ENCODE measurements at regions of chr15 and their contacts with region 1.

Region 1: DNA sequence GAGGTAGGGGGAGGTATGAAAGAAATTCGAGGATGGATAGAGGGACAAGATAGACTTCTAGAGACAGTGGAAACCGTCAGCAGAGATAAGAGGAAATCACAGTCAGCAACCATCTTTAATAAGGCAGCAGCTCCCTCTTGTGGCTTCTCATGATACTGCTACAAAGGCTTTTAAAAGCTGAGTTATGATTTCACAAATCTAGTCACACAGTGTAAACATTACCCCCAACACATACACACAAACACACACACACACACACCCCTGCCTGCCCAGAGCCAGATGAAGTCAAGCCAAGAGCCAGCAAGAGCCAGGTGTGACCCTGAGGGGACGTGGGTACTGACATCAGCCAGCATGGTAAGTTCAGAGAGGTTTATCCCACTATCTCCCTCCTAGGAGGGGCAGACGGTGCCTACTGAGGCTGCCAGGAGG is 18.9 kb upstream of the TGM5 start:
- DNase-seq: peak; percentile 39
- H3K4me3 ChIP-seq: no peak overlapping the region
- H3K27ac ChIP-seq: no peak overlapping the region
- H3K4me1 ChIP-seq: no peaks in the 10 kb centered on the region
- H3K27me3 ChIP-seq: peaks cover 9% of the 10 kb centered on the region
- CTCF ChIP-seq: peak; percentile 77 to 86 (median 79)
- EP300 ChIP-seq: no peak
- POLR2A ChIP-seq: no peak

Region 2: DNA sequence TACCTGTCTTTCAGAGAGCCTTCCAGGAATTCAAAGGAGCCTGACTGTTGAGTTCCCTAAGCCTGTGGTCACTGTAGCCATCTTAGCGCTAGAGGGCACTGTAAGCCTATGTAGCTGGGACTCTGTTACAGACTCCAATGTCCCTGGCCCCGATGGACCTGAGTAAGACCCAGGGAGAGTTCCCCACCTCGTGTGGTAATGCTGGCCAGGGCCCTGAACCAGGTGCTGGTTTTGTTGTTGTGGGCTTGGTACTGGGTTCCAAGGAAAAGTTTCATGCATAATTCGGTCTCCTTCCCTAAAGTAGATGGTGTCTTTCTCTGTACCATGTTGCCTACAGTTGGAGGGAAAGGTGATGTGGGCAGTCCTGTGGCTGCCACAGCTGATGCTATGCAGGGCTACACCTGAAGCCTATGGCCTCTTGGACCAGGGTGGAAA is 581.1 kb before region 1 on chr15:
- in situ Hi-C with region 1: loop called in 1 of 4 experiments (anchors 25 kb)
- intact Hi-C with region 1: no loop called
- DNase-seq: peak; percentile 69
- H3K4me3 ChIP-seq: no peak overlapping the region
- H3K27ac ChIP-seq: no peak overlapping the region
- H3K4me1 ChIP-seq: peaks cover 0 to 4% (median 1%) of the 10 kb centered on the region in 4 donors
- H3K27me3 ChIP-seq: no peaks in the 10 kb centered on the region
- CTCF ChIP-seq: peak; percentile 65 to 77 (median 72)
- EP300 ChIP-seq: no peak
- POLR2A ChIP-seq: no peak

Region 3: DNA sequence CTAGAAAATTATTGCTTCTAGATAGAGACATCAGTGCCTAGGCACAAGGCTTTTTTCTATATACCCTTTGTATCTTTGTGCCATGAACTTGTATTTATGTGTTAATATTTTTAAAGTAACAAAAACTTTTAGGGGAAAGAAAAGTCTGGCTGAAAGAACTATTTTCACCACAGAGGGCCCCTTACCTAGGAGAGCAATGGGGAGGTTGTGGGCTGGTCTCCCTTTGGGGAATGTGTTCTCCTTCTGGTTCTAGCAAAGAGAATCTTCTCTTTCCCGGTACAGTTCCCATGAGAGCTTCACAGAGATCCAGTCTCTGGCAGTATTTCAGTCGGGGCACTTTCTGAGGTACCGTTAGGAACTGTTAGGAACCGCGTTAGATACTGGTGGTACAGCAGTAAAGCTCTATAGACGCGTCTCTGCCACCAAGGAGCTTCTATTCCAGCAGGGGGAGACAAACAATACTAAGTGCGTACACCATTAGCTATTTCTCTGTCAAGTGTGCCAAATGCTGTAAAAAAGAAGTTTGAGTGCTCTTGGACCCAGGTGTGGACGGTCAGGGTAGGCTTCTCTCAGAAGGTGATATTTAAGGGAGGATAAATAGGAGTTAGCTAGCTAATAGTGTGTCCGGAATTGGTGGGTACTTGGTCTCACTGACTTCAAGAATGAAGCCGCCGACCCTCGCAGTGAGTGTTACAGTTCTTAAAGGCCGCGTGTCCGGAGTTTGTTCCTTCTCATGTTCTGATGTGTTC is 60.2 kb before region 1 on chr15:
- in situ Hi-C with region 1: loop called in 1 of 4 experiments (anchors 5 kb)
- intact Hi-C with region 1: loop called (anchors 10 kb)
- DNase-seq: peak; percentile 18
- H3K4me3 ChIP-seq: no peak overlapping the region
- H3K27ac ChIP-seq: no peak overlapping the region
- H3K4me1 ChIP-seq: no peaks in the 10 kb centered on the region
- H3K27me3 ChIP-seq: no peaks in the 10 kb centered on the region
- CTCF ChIP-seq: peak; percentile 54 to 64 (median 60)
- EP300 ChIP-seq: no peak
- POLR2A ChIP-seq: no peak

Region 4: GRCh38 chr15:43230640-43231115 is 54.9 kb before region 1 on chr15:
- in situ Hi-C with region 1: loop called in 1 of 4 experiments (anchors 5 kb)
- intact Hi-C with region 1: loop called (anchors 10 kb)
- DNase-seq: no peak
- H3K4me3 ChIP-seq: no peak overlapping the region
- H3K27ac ChIP-seq: no peak overlapping the region
- H3K4me1 ChIP-seq: no peaks in the 10 kb centered on the region
- H3K27me3 ChIP-seq: no peaks in the 10 kb centered on the region
- CTCF ChIP-seq: no peak
- EP300 ChIP-seq: no peak
- POLR2A ChIP-seq: no peak